ENCODE measurements at regions of chr9 and their contacts with region 1.

Region 1: GRCh38 chr9:98848450-98849149 is 41.1 kb downstream of the GALNT12 start:
- DNase-seq: peak; percentile 54
- H3K4me3 Mint-ChIP-seq: no peak overlapping the region
- H3K27ac Mint-ChIP-seq: no peak overlapping the region
- H3K4me1 Mint-ChIP-seq: peaks cover 7% of the 10 kb centered on the region
- H3K27me3 Mint-ChIP-seq: no peaks in the 10 kb centered on the region

Region 2: GRCh38 chr9:99134893-99135341 is 286.3 kb after region 1 on chr9:
- intact Hi-C with region 1: loop called (anchors 5 kb)
- DNase-seq: no peak
- H3K4me3 Mint-ChIP-seq: no peak overlapping the region
- H3K27ac Mint-ChIP-seq: no peak overlapping the region
- H3K4me1 Mint-ChIP-seq: peaks cover 45% of the 10 kb centered on the region
- H3K27me3 Mint-ChIP-seq: no peaks in the 10 kb centered on the region